B cell (primary cell): ENCODE measurements at regions of chr18 and their contacts with region 1.

Region 1: DNA sequence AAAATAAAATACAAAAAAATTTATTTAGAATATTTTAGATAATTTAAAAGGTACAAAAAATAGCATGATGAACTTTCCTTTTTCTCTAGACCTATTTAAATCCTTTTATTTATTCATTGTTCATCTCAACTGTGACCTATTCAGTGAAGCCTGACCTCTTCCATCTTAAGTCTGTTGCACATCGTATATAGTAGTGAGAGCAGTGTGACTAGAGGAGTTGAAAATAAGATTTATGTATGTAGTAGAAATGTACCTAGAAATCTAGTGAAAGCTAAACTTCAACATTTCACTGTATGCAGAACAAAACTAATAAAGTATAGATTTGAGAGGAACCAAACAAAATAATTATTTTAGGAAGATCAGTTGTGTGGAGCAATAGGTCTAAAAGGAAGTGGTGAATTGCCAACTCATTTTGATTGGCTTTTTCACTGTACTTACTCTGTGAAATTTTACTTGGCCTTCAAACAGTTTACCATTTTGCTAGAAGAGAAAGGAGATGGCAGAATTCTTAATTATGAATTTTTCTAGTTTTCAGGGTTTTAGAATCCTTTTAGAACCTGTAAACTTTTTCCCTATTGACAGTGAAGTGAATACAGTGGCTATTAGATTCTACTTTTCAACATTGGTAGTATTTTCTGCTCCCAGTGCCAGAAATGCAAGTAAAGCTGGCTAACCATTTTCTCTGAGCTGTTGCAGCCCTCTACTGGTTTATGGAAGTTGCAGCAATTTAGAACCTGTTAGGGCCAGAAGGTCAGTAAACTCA is 11.0 kb downstream of the ANKRD12 start:
- DNase-seq: peak; percentile 72
- ATAC-seq: peak; percentile 60
- H3K4me3 ChIP-seq: no peak overlapping the region
- H3K4me3 Mint-ChIP-seq: peak overlapping the region; percentile 58
- H3K27ac ChIP-seq: peak overlapping the region; percentile 35 to 48
- H3K27ac Mint-ChIP-seq: peak overlapping the region; percentile 74
- H3K4me1 ChIP-seq: peaks cover 63 to 68% of the 10 kb centered on the region in 2 donors
- H3K4me1 Mint-ChIP-seq: peaks cover 72% of the 10 kb centered on the region
- H3K27me3 ChIP-seq: no peaks in the 10 kb centered on the region
- H3K27me3 Mint-ChIP-seq: no peaks in the 10 kb centered on the region
- CTCF ChIP-seq: peak; percentile 76

Region 2: DNA sequence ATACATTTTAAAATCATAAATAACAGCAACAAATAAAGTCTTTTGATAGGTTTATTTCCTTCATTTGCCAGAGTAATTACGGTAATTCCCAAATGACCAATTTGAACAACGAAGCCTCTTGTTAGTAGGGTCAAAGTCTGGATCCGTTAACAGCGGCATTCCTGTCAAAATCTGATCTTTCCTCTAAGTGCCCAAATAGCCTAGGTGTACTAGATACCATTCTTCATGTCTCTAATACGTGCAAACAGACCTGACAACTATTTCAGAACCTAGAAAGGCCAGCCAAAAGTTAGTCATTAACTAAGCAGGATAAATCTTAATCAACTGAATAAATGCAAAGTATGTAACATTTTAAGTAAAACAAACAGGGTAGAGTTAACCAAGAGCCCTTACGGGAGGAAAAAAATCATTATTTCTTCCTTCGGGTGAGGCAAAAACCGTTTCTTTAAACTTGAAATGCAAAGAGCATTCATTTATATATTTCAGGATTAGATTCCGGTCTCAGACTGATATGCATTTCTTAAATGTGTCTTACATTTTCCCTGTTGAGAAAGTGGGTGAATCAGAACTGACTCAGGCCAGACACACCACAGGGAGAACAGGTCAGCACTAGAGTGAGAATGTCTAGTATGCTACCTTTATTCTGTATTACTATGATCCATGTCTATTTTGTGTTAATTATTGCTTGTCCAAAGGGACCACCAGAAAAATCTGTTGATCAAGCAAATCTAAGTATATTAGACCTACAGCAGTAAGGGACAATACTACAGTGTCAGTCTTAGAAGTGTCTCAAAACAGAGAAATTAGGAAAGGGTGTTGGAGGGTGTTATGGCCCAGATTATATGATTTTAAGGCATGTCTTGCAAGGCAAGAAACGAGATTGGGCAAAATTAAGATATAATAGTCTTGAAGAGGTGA is 186.6 kb before region 1 on chr18:
- CTCF ChIA-PET with region 1: no interaction called
- POLR2A ChIA-PET with region 1: no interaction called
- intact Hi-C with region 1: no loop called
- DNase-seq: no peak
- ATAC-seq: no peak
- H3K4me3 ChIP-seq: no peak overlapping the region
- H3K4me3 Mint-ChIP-seq: no peak overlapping the region
- H3K27ac ChIP-seq: no peak overlapping the region
- H3K27ac Mint-ChIP-seq: no peak overlapping the region
- H3K4me1 ChIP-seq: peaks cover under 1 to 3% of the 10 kb centered on the region in 2 donors
- H3K4me1 Mint-ChIP-seq: peaks cover 10% of the 10 kb centered on the region
- H3K27me3 ChIP-seq: no peaks in the 10 kb centered on the region
- H3K27me3 Mint-ChIP-seq: no peaks in the 10 kb centered on the region
- CTCF ChIP-seq: no peak

Region 3: DNA sequence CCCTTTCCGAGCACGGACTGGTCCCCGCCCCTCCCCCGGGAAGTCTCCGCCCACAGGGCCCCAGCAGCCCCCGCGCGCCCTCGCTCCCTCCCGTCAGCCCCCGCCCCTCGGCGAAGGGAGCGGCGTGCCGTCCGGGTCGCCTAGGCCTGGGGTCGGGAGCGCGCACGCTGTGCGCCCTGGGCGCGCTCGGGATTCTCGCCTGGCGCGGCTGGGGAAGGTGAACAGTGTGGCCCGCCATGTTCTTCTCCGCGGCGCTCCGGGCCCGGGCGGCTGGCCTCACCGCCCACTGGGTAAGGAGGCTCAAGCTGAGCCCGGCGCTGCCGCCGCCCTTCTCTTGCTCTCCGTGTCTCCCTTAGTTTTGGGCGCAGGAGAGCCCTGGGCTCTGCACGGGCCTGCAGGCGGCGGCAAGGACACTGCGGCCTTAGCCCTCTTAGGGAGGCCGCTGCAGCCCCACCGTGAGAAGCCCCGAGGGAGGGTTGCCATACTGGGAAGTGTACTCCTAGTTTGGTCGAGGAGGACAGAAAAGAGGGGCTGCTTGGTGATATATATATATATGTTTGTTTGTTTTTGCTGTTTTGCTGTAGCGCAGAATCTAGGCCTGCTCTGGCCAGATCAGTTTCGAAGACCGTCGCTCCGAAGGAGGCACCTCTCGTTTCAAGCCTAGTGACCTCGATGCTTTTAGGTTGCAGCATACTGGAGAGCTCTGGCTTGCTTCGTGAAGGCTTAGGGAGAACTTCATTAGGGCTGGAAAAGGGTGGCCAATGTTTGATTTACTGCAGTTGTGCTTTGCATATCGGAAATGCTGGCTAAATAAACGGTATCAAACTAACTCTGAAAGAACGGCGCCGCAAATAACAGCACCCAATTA is 44.9 kb before region 1 on chr18 and contains the start of gene NDUFV2:
- CTCF ChIA-PET with region 1: interaction called, 18 read pairs
- POLR2A ChIA-PET with region 1: interaction called, 7 read pairs
- intact Hi-C with region 1: no loop called
- DNase-seq: peak; percentile 96
- ATAC-seq: peak; percentile 96
- H3K4me3 ChIP-seq: peak within 1 kb of the TSS; percentile 77 to 98 (median 88)
- H3K4me3 Mint-ChIP-seq: peak within 1 kb of the TSS; percentile 95
- H3K27ac ChIP-seq: peak within 1 kb of the TSS; percentile 80 to 86
- H3K27ac Mint-ChIP-seq: peak within 1 kb of the TSS; percentile 93
- H3K4me1 ChIP-seq: peaks cover 43 to 50% of the 10 kb centered on the region in 2 donors
- H3K4me1 Mint-ChIP-seq: peaks cover 54% of the 10 kb centered on the region
- H3K27me3 ChIP-seq: no peaks in the 10 kb centered on the region
- H3K27me3 Mint-ChIP-seq: no peaks in the 10 kb centered on the region
- CTCF ChIP-seq: no peak
- total RNA-seq, gene NDUFV2: 135 and 137 TPM in 2 replicates

Region 4: DNA sequence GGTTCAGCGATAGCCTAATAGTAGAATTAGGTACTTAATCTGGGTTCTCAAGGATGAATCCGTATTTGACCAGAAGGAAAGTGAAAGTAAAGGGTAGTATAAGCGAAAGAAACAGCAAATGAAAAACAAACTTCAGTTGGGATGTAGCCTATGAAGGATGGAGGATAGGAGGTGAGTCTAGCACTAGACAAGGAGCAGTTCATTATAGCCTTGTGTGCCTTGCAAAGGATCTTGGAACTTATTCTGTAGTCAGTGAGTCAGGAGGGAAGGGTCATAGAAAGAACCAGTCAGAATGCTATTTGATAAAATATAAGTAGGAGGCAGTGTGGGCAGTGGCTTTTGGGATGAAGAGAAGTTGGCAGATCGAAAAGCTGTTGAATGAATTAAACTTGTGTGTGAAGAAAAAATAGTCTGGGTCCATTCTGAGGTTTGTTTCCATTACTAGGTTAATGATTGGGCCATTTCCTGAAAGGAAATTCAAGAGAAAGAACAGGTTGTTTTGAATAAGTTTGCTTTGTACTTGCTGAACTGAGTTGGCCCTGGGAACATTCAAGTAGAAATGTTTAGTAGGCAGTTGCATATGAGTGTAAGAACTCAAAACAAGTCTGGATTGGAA is 37.5 kb after region 1 on chr18:
- CTCF ChIA-PET with region 1: interaction called, 3 read pairs
- POLR2A ChIA-PET with region 1: no interaction called
- intact Hi-C with region 1: loop called (anchors 5 kb)
- DNase-seq: peak; percentile 25
- ATAC-seq: no peak
- H3K4me3 ChIP-seq: peak overlapping the region in 2 of 5 experiments; percentile 18 to 49
- H3K4me3 Mint-ChIP-seq: peak overlapping the region; percentile 72
- H3K27ac ChIP-seq: peak overlapping the region; percentile 19 to 44
- H3K27ac Mint-ChIP-seq: peak overlapping the region; percentile 51
- H3K4me1 ChIP-seq: peaks cover 13 to 31% of the 10 kb centered on the region in 2 donors
- H3K4me1 Mint-ChIP-seq: peaks cover 46% of the 10 kb centered on the region
- H3K27me3 ChIP-seq: no peaks in the 10 kb centered on the region
- H3K27me3 Mint-ChIP-seq: no peaks in the 10 kb centered on the region
- CTCF ChIP-seq: no peak